Aorta (tissue), 5 donors: ENCODE measurements at regions of chr18 and their contacts with region 1.

Region 1: DNA sequence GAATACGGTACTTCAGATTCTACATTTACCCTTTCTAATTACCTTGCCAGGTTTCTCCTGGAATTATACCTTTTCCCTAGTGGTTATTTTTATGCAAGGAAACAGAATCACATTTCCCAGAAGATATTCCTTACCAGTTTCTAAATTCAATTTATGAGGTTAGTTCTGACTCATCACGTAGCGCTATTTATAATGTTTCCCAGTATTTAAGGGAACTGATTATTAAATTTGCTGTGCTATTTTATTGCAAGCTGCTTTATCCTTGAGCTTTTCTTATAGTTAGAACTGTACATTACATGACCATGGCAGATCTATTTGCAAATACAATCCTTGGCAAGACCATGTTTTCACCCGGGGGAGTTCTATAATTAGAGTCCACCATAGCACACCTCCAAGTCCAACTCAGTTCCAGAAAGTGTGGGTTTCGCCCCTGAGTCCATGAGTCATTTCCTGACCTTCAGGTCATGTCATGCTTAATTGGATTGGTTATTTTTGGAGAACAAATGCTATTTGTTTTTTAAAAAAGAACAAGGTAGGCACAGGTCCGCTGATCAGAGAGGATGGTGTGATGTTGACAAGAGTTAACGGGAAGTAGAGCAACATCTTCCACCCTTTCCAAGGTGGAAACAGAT is 126.6 kb downstream of the ZNF532 start:
- DNase-seq: no peak
- ATAC-seq: peak; percentile 51
- H3K4me3 ChIP-seq: no peak overlapping the region
- H3K27ac ChIP-seq: peak overlapping the region; percentile 100
- H3K4me1 ChIP-seq: peaks cover 13 to 15% of the 10 kb centered on the region in 2 donors
- H3K27me3 ChIP-seq: no peaks in the 10 kb centered on the region

Region 2: GRCh38 chr18:58858616-58859468 is 132.4 kb before region 1 on chr18:
- intact Hi-C with region 1: loop called in 1 of 2 experiments (anchors 2 kb)
- DNase-seq: peak in 1 of 2 donors; percentile 76
- ATAC-seq: peak; percentile 82
- H3K4me3 ChIP-seq: no peak overlapping the region
- H3K27ac ChIP-seq: peak overlapping the region; percentile 76 to 87
- H3K4me1 ChIP-seq: peaks cover 0 to 7% of the 10 kb centered on the region in 2 donors
- H3K27me3 ChIP-seq: no peaks in the 10 kb centered on the region

Region 3: DNA sequence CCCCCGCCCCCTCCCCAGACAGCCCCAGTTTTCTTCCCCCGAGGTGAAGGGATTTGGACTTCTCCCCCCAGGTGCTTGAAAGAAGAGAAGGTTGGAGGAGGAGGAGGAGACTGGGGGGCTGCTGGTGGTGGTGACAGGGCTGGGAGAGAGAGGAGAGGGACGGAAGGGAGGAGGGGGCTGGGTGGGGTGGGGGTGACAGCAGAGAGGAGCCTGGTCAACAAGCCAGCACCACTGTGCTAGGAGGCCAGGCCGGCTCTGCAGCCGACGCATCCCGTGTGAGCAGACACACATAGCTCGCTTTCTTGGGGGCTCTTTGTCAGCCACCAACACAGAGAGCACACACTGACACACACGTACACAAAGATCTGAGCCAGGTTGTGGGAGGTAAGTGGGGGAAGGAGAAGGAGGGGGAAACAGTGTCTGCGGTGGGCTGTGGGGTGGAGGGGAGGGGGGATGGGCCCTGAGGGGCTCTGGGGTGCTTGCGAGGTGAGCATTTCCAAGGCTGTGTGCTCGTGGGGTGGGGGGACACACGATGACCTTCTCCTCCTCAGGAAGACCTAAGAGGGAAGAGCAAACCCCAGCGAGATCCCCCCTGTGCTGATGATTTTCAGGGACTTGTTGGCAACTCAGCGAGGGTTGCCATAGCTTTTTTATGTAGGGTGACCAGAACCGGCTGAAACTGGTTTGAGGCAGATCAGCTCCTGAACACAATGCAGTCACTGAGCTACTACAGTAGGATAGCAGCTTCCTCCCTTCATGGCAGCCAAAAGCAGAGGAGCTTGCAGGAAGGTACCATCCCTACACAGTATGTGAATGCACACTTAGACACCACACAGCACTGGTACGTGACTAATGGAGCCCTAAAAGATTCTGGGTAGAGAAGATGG is 126.9 kb before region 1 on chr18 and contains the start of gene ZNF532:
- intact Hi-C with region 1: loop called (anchors 2 to 5 kb)
- DNase-seq: peak in 1 of 2 donors; percentile 62
- ATAC-seq: peak; percentile 65
- H3K4me3 ChIP-seq: peak within 1 kb of the TSS; percentile 29 to 74
- H3K27ac ChIP-seq: peak within 1 kb of the TSS; percentile 99 to 100
- H3K4me1 ChIP-seq: peaks cover 2 to 15% of the 10 kb centered on the region in 2 donors
- H3K27me3 ChIP-seq: no peaks in the 10 kb centered on the region
- total RNA-seq, gene ZNF532: 183 to 194 TPM

Region 4: GRCh38 chr18:58882044-58882443 is 109.2 kb before region 1 on chr18:
- intact Hi-C with region 1: loop called in 1 of 2 experiments (anchors 5 kb)
- DNase-seq: no peak
- ATAC-seq: no peak
- H3K4me3 ChIP-seq: no peak overlapping the region
- H3K27ac ChIP-seq: peak overlapping the region; percentile 82 to 87
- H3K4me1 ChIP-seq: peaks cover 6 to 7% of the 10 kb centered on the region in 2 donors
- H3K27me3 ChIP-seq: no peaks in the 10 kb centered on the region

Region 5: DNA sequence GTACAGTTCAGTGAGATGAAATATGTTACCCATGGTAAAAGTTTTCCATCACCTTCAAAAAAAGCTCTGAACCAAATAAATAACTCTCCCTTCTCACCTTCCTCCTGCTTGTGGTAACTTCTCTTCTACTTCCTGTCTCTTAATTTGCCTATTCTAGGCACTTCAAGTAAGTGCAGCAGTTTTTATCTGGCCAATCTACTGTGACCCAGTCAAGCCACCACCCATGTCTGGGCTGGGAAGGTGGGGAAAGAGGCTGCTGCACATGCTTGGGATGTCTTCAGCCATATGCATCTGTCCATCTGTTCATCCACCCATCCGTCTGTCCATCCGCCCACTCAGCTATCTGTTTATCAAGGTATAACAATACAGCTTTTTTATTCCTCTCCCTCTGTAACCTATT is 95.0 kb before region 1 on chr18:
- intact Hi-C with region 1: loop called in 1 of 2 experiments (anchors 5 kb)
- DNase-seq: no peak
- ATAC-seq: no peak
- H3K4me3 ChIP-seq: no peak overlapping the region
- H3K27ac ChIP-seq: no peak overlapping the region
- H3K4me1 ChIP-seq: peaks cover 2 to 9% of the 10 kb centered on the region in 2 donors
- H3K27me3 ChIP-seq: no peaks in the 10 kb centered on the region

Region 6: DNA sequence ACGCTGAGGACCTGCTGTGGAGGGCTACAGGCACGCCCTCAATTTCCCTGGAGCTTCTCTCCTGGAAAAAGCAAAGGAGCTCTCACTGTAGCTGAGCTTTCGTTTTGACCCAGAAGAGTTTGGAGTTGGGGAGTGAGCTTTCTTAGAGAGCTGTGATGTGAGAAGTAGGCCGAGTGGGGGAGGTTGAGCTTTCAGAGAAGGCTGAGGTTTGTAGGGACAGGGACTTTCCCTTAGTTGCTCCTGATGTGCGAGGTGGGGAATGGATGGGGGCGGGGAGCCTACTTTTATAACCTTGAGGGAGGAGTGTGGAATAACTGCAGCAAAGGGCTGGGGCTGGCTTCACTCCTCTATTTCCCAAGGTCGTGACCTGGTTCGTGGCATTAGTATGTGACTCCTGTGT is 79.5 kb before region 1 on chr18:
- intact Hi-C with region 1: loop called (anchors 5 kb)
- DNase-seq: no peak
- ATAC-seq: peak; percentile 28
- H3K4me3 ChIP-seq: no peak overlapping the region
- H3K27ac ChIP-seq: peak overlapping the region; percentile 72 to 92
- H3K4me1 ChIP-seq: peaks cover 0 to 2% of the 10 kb centered on the region in 2 donors
- H3K27me3 ChIP-seq: no peaks in the 10 kb centered on the region

Region 7: DNA sequence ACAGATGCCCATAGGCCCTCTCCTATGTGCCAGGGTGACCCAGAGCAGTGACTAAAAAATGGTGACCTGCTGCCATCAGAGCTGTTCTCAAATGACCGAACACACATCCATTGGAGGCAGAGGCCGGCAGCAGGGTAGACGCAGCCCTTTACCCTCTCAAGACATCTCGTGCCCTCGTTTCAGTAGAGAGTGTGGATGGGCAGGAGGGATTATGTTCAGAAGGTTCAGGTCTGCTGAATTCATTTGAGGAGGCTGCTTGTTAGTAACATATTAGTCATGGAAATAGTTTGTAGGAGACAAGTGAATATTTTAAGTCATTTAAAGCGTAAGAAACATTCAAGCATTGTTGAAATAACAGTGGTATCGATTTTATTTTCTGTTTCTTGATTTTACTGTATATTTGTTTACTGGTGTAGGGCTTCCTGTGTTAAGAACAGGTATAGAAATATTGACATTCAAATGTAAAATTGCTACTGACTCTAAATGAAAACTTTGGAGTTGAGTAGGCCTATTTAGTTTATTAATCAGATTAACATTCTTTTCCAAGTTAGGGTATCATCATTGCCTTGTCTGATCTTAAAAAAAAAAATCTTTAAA is 44.0 kb before region 1 on chr18:
- intact Hi-C with region 1: no loop called
- DNase-seq: no peak
- ATAC-seq: no peak
- H3K4me3 ChIP-seq: no peak overlapping the region
- H3K27ac ChIP-seq: no peak overlapping the region
- H3K4me1 ChIP-seq: peaks cover 0 to 3% of the 10 kb centered on the region in 2 donors
- H3K27me3 ChIP-seq: no peaks in the 10 kb centered on the region